ENCODE measurements at regions of chr11 and their contacts with region 1.

Region 1: DNA sequence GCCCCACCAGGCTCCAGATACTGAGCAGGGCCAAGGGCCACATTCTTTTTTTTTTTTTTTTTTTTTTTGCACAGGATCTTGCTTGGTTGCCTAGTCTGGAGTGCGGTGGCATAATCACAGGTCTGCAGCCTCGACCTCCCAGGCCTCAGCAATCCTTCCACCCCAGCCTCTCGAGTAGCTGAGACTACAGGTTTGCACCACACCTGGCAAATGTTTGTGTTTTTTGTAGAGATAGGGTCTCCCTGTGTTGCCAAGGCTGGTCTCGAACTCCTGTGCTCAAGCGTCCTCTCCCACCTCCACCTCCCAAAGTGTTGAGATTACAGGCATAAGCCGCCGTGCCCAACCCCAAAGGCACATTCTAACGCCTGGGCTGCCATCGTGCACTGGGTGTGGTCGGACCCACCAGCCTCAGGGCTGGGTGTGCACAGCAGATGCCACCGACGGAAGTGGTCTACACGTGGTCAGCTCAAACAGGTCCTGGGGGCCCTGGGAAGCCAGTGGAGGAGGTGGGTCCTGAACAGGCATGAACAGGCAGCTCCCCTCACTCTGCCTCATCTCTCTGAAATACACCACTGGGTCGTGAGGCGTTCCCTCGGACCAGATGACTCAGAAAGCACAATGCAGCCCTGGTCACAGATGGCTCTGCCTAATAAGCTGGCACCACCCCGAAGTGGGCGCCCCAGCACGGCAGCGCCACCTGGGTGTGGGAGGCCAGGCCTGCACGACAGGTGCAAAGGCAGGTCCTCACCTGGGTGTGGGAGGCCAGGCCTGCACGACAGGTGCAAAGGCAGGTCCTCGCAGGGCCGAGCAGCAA is 5.1 kb upstream of the B4GALNT4 start:
- DNase-seq: peak; percentile 60
- ATAC-seq: no peak

Region 2: DNA sequence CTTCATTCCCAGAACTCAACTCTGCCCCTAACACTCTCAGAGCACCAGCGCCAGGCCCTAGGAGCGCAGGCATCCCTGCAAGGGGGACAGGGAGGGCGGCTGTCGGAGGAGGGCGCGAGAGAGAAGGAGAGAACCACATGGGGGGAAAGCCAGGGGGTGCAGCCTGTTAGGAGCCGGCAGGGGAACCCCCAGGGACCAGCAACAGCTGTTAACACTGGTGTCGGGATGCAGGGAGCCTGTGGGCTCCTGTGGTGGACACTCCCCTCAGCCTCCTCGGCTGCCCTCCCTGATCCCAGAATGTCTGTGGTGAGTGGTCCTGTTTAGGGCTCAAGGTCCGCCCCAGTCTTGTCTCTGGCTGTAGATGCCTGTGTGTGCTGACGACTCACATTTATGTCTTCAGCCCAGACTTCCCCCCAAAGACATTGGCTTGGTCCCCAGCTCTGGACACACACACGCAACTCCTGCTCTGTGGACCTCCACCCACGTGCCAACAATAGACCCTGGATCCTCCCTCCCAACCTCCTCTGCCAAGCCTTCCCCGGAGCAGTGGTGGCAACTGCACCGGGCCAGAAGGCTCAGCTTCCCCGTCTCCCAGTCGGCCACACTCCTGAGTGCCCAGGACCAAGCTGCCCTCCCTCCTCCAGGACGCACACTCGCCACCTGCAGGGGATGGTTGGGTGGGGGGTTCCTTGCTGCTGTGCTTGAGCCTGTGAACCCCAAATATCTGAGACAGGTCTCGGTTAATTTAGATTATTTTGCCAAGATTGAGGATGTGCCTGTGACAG is 64.0 kb before region 1 on chr11:
- intact Hi-C with region 1: loop called (anchors 5 kb)
- DNase-seq: no peak
- ATAC-seq: no peak

Measured in sciatic nerve (tissue), 2 donors.